T-cell (primary cell): ENCODE measurements at regions of chr1 and their contacts with region 1.

Region 1: DNA sequence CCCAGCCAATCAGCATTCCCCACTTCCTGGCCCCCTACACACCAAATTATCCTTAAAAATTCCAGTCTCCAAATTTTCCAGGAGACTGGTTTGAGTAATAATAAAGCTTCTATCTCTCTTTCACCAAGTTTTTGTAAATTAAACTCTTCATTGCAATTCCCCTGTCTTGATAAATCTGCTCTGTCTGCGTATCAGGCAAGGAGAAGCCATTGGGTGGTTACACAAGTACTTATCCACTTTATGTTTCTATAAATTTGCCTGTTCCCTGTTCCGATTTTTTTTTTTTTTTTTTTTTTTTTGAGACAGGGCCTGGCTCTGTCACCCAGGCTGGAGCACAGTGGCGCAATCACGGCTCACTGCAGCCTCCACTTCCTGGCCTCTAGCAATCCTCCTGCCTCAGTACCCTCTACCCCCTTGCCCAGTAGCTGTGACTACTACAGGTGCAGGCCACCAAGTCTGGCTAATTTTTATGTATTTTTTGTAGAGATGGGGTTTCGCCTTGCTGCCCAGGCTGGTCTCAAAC is 11.1 kb upstream of the CSRP1 start:
- DNase-seq: no peak
- ATAC-seq: no peak
- H3K4me3 ChIP-seq: no peak overlapping the region
- H3K4me3 Mint-ChIP-seq: no peak overlapping the region
- H3K27ac ChIP-seq: no peak overlapping the region
- H3K27ac Mint-ChIP-seq: no peak overlapping the region
- H3K4me1 ChIP-seq: no peaks in the 10 kb centered on the region
- H3K4me1 Mint-ChIP-seq: peaks cover 0 to 1% (median 0%) of the 10 kb centered on the region in 3 donors
- H3K27me3 ChIP-seq: no peaks in the 10 kb centered on the region
- H3K27me3 Mint-ChIP-seq: no peaks in the 10 kb centered on the region

Region 2: DNA sequence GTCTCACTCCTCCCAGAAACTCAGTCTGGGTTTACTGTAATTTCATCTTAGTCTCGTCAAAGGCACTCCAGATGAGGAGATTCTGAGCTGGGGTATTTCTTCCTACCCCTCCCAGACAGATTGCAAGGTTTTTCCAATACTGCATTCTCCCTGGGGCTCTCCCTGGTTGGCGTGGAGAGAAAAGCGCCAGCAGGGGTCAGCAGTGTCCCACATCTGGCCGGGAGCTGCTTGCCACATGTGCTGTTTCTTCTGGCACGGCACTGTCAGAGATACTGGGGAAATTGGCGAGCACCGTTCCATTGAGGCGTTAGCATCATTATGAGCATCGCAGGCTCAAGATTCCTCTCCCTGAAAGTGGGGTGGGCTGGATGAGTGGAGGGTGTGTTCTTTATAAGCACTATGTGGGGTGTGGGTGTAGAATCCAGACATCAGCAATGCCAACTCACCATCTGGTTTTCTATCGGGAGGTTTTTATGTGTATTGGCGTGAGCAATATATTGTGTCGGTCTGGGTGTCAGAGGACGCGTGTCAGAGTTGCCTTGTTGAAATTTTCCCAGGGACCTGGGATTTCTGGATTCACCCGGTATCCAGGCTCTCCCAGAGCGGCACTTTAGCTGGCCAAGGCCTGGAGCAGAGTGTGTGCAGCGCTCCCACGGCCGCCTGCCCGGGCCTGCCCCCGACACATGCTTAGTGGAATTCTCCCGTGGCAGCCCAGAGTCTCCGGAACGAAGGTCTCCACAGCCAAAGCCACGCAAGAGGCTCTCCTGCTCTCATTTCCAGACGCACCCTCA is 12.9 kb after region 1 on chr1:
- CTCF ChIA-PET with region 1: interaction called, 3 to 10 read pairs
- POLR2A ChIA-PET with region 1: interaction called in 1 of 2 experiments, 18 read pairs
- DNase-seq: peak in 3 of 35 experiments; percentile 21 to 23 (median 23)
- ATAC-seq: no peak
- H3K4me3 ChIP-seq: no peak overlapping the region
- H3K4me3 Mint-ChIP-seq: no peak overlapping the region
- H3K27ac ChIP-seq: no peak overlapping the region
- H3K27ac Mint-ChIP-seq: no peak overlapping the region
- H3K4me1 ChIP-seq: no peaks in the 10 kb centered on the region
- H3K4me1 Mint-ChIP-seq: peaks cover 0 to 5% (median 0%) of the 10 kb centered on the region in 3 donors
- H3K27me3 ChIP-seq: peaks cover 0 to 23% of the 10 kb centered on the region in 2 experiments
- H3K27me3 Mint-ChIP-seq: peaks cover 9 to 11% of the 10 kb centered on the region in 2 donors

Region 3: GRCh38 chr1:201628490-201628889 is 110.5 kb after region 1 on chr1:
- CTCF ChIA-PET with region 1: no interaction called
- POLR2A ChIA-PET with region 1: no interaction called
- DNase-seq: no peak
- ATAC-seq: no peak
- H3K4me3 ChIP-seq: no peak overlapping the region
- H3K4me3 Mint-ChIP-seq: no peak overlapping the region
- H3K27ac ChIP-seq: no peak overlapping the region
- H3K27ac Mint-ChIP-seq: no peak overlapping the region
- H3K4me1 ChIP-seq: no peaks in the 10 kb centered on the region
- H3K4me1 Mint-ChIP-seq: no peaks in the 10 kb centered on the region
- H3K27me3 ChIP-seq: peaks cover 0 to 8% of the 10 kb centered on the region in 2 experiments
- H3K27me3 Mint-ChIP-seq: no peaks in the 10 kb centered on the region